Activated B cell treated with CpG ODN at 0.5 μM for 24 hours (primary cell): ENCODE measurements at regions of chr9 and their contacts with region 1.

Region 1: GRCh38 chr9:81689343-81690190 is at the start of gene TLE1:
- DNase-seq: peak; percentile 94
- ATAC-seq: peak; percentile 77
- H3K4me3 Mint-ChIP-seq: peak within 1 kb of the TSS; percentile 96
- H3K27ac Mint-ChIP-seq: peak within 1 kb of the TSS; percentile 89
- H3K4me1 Mint-ChIP-seq: peaks cover 17% of the 10 kb centered on the region
- H3K27me3 Mint-ChIP-seq: no peaks in the 10 kb centered on the region
- CTCF ChIP-seq: no peak
- total RNA-seq, gene TLE1: 15.6 and 16.3 TPM in 2 replicates

Region 2: DNA sequence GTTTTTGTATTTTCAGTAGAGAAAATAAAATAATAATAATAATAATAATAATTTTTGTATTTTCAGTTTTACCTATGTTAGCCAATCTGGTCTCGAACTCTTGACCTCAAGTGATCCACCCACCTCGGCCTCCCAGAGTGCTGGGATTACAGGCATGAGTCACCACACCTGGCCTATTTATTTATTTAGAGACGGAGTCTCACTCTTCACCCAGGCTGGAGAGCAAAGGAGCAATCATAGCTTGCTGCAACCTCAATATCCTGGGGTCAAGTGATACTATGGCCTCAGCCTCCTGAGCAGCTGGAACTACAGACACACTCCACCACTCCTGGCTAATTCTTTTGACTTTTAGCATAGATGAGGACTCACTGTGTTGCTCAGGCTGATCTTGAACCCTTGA is 167.7 kb before region 1 on chr9:
- CTCF ChIA-PET with region 1: interaction called, 128 read pairs
- POLR2A ChIA-PET with region 1: interaction called, 8 read pairs
- intact Hi-C with region 1: loop called (anchors 1 kb)
- DNase-seq: no peak
- ATAC-seq: no peak
- H3K4me3 Mint-ChIP-seq: no peak overlapping the region
- H3K27ac Mint-ChIP-seq: no peak overlapping the region
- H3K4me1 Mint-ChIP-seq: peaks cover 7% of the 10 kb centered on the region
- H3K27me3 Mint-ChIP-seq: peaks cover 5% of the 10 kb centered on the region
- CTCF ChIP-seq: no peak

Region 3: DNA sequence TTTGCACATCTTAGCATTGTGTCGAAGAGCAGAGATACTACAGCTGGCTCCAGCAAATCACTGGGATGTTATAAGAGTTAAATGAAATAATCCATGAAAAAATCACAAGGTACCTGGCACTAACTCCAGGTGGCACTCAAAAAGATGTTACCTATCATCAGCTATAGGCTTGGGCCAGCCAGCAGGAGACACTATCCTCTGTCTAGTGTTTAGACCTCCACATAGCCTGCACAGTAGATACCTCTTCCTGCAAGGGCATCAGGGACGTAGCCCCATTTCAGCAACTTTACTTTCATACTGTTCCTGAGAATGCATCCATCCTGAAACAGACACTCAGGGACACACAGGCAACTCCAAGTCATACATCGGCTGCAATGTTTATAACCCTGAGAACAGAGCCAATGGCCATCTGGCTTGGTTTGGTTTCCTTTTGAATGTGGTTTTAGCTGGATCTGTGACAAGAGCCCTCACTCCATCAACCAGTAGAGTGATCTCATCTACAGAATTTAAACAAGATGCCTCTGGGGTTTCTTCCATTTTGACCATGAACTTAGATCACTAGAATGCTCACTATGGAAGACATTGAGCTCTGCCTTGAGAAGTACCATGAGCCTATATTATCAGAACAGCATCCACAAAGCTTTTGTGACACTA is 70.1 kb before region 1 on chr9:
- CTCF ChIA-PET with region 1: interaction called, 5 read pairs
- POLR2A ChIA-PET with region 1: interaction called, 3 read pairs
- intact Hi-C with region 1: loop called (anchors 1 kb)
- DNase-seq: no peak
- ATAC-seq: peak; percentile 45
- H3K4me3 Mint-ChIP-seq: peak overlapping the region; percentile 24
- H3K27ac Mint-ChIP-seq: no peak overlapping the region
- H3K4me1 Mint-ChIP-seq: peaks cover 40% of the 10 kb centered on the region
- H3K27me3 Mint-ChIP-seq: no peaks in the 10 kb centered on the region
- CTCF ChIP-seq: no peak

Region 4: DNA sequence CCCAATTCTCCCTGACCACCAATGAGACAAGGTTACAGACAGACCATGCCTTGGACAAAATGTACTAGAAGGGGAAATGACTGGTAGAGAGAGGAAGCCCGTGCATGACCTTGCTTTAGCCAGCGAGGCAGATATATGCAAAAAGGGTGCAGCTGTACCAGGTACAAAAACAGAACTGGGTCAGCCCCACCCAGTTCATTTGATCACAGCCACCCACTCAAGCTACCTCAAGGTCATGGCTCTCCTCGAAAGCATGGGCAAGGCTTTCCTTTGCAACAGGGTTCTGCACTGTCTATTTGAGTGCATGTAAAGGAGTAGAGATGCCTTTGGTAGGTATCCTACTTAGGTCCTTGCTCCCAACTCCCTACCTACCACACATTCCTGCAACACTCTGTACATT is 33.6 kb before region 1 on chr9:
- CTCF ChIA-PET with region 1: interaction called, 4 read pairs
- POLR2A ChIA-PET with region 1: interaction called, 22 read pairs
- intact Hi-C with region 1: loop called (anchors 1 kb)
- DNase-seq: peak; percentile 42
- ATAC-seq: peak; percentile 89
- H3K4me3 Mint-ChIP-seq: peak overlapping the region; percentile 78
- H3K27ac Mint-ChIP-seq: peak overlapping the region; percentile 97
- H3K4me1 Mint-ChIP-seq: peaks cover 84% of the 10 kb centered on the region
- H3K27me3 Mint-ChIP-seq: no peaks in the 10 kb centered on the region
- CTCF ChIP-seq: no peak

Region 5: DNA sequence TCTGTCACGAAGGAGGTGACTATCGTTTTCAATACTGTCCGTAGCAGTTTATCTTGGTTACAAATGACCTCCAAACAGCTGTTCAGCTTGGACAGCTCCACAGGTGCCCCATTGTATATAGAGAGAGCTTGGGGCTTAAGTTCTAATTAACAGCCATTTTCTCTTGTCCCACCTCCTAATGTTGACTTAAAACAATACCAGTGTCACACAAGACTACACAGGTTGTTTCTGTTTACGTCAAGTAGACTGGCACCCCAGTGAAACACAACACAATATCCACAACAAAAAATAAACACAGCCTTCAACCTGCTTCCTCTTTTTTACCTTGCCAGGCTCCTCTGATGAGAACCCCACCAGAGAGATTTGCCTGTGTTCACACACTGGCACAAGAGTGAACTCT is 39.6 kb after region 1 on chr9:
- CTCF ChIA-PET with region 1: no interaction called
- POLR2A ChIA-PET with region 1: interaction called, 7 read pairs
- intact Hi-C with region 1: loop called (anchors 1 kb)
- DNase-seq: no peak
- ATAC-seq: peak; percentile 72
- H3K4me3 Mint-ChIP-seq: peak overlapping the region; percentile 76
- H3K27ac Mint-ChIP-seq: peak overlapping the region; percentile 76
- H3K4me1 Mint-ChIP-seq: peaks cover 23% of the 10 kb centered on the region
- H3K27me3 Mint-ChIP-seq: no peaks in the 10 kb centered on the region
- CTCF ChIP-seq: no peak

Region 6: DNA sequence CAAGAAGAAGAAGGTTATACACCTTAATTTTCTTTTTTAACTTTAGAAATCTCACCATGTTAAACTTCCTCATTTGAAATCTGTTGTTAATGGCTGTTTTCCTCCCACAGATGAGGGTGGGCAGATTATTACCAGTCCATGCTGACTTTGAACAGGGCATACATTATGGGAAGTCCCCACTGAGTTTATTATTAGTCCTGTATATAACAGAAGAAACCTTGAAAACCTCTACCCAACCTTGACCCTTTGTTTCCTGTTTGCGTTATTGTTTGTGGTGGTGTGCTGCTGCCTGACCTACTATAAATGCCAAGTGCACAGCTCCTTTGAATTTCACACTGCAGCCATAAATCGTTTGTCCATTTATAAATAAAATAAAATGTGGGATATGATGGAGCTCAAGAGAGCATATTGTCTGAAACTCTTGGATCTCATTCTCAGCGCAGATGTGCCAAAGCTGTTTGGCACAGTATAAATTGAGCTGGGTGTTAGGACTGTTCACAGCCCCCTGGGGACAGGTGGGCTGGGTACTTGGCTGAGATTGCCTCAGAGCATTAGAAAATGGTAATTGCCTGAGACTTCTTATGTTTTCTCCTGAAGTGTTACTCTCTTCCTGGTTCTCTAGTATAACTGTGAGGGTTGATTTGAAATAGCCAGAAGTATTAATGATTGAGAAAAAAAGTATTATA is 438.6 kb after region 1 on chr9:
- CTCF ChIA-PET with region 1: no interaction called
- POLR2A ChIA-PET with region 1: interaction called, 3 read pairs
- intact Hi-C with region 1: loop called (anchors 1 kb)
- DNase-seq: no peak
- ATAC-seq: peak; percentile 90
- H3K4me3 Mint-ChIP-seq: peak overlapping the region; percentile 60
- H3K27ac Mint-ChIP-seq: peak overlapping the region; percentile 84
- H3K4me1 Mint-ChIP-seq: peaks cover 72% of the 10 kb centered on the region
- H3K27me3 Mint-ChIP-seq: no peaks in the 10 kb centered on the region
- CTCF ChIP-seq: no peak

Region 7: GRCh38 chr9:82961504-82962125 is 1272.0 kb after region 1 on chr9:
- CTCF ChIA-PET with region 1: no interaction called
- POLR2A ChIA-PET with region 1: no interaction called
- intact Hi-C with region 1: loop called (anchors 5 kb)
- DNase-seq: no peak
- ATAC-seq: peak; percentile 60
- H3K4me3 Mint-ChIP-seq: no peak overlapping the region
- H3K27ac Mint-ChIP-seq: no peak overlapping the region
- H3K4me1 Mint-ChIP-seq: no peaks in the 10 kb centered on the region
- H3K27me3 Mint-ChIP-seq: peaks cover 4% of the 10 kb centered on the region
- CTCF ChIP-seq: no peak